T-cell (primary cell): ENCODE measurements at regions of chr7 and their contacts with region 1.

Region 1: DNA sequence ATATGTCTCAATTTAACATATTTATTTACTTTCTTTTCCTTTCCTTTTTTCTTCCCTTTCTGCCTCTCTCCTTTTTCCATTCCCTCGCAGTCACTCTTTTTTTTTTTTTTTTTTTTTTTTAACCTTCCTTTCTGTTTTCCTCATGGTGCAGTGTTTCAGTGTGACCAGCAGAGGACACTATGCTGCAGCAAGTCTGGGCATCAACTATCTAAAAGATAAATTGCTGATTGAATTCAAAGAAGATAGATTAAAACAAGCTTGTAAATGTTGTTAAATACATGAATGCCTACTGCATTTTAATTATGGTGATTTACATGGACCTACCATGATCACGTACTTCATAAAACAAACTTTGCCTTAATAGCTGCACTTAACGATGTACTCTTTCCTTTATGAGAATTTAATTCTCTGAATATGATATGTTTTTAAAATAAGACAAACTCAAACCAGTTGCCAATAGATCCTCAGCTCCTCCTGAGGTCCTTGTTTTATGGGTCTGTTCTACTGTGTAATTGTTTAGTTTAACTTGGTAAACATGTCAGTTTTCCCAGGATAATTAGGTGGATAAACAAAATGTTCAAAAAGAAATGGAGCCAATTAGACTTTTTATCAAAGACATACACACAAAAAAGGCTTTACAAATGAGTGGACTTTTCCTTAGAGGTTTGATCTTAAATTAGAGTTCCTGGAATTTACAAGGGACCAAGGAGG is 101.0 kb upstream of the AGR3 start:
- DNase-seq: peak in 18 of 35 experiments; percentile 1 to 61 (median 4)
- ATAC-seq: peak in 2 of 4 experiments; percentile 49 to 51
- H3K4me3 ChIP-seq: no peak overlapping the region
- H3K4me3 Mint-ChIP-seq: no peak overlapping the region
- H3K27ac ChIP-seq: no peak overlapping the region
- H3K27ac Mint-ChIP-seq: peak overlapping the region in 1 of 2 donors; percentile 65
- H3K4me1 ChIP-seq: no peaks in the 10 kb centered on the region
- H3K4me1 Mint-ChIP-seq: peaks cover 3 to 7% (median 6%) of the 10 kb centered on the region in 3 donors
- H3K27me3 ChIP-seq: peaks cover 0 to 3% of the 10 kb centered on the region in 2 experiments
- H3K27me3 Mint-ChIP-seq: peaks cover 4 to 6% of the 10 kb centered on the region in 2 donors

Region 2: DNA sequence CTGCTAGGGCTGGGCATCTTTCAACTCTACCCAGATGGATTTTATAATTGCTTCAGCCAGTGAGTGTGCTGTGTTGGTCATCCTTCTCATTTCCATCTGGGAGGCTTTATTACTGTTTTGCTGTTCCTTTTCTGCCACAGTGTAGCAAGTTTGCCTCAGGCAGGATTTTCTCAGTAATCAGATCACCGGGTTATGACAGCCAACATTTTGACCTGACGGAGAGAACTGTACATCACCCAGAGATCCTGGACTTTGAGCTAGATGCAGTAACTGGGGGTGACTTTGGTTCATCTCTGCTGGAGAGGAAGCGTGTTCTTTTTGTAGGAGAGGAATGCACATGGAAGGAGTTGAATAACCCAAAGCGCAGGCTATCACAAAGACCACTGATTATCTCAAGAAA is 10.7 kb after region 1 on chr7:
- CTCF ChIA-PET with region 1: interaction called, 10 to 13 read pairs
- POLR2A ChIA-PET with region 1: no interaction called
- DNase-seq: no peak
- ATAC-seq: no peak
- H3K4me3 ChIP-seq: no peak overlapping the region
- H3K4me3 Mint-ChIP-seq: no peak overlapping the region
- H3K27ac ChIP-seq: no peak overlapping the region
- H3K27ac Mint-ChIP-seq: no peak overlapping the region
- H3K4me1 ChIP-seq: no peaks in the 10 kb centered on the region
- H3K4me1 Mint-ChIP-seq: no peaks in the 10 kb centered on the region
- H3K27me3 ChIP-seq: no peaks in the 10 kb centered on the region
- H3K27me3 Mint-ChIP-seq: no peaks in the 10 kb centered on the region

Region 3: GRCh38 chr7:17871815-17872533 is 889.2 kb after region 1 on chr7:
- CTCF ChIA-PET with region 1: interaction called, 5 to 12 read pairs
- POLR2A ChIA-PET with region 1: no interaction called
- DNase-seq: no peak
- ATAC-seq: no peak
- H3K4me3 ChIP-seq: no peak overlapping the region
- H3K4me3 Mint-ChIP-seq: no peak overlapping the region
- H3K27ac ChIP-seq: no peak overlapping the region
- H3K27ac Mint-ChIP-seq: no peak overlapping the region
- H3K4me1 ChIP-seq: no peaks in the 10 kb centered on the region
- H3K4me1 Mint-ChIP-seq: no peaks in the 10 kb centered on the region
- H3K27me3 ChIP-seq: no peaks in the 10 kb centered on the region
- H3K27me3 Mint-ChIP-seq: no peaks in the 10 kb centered on the region

Region 4: DNA sequence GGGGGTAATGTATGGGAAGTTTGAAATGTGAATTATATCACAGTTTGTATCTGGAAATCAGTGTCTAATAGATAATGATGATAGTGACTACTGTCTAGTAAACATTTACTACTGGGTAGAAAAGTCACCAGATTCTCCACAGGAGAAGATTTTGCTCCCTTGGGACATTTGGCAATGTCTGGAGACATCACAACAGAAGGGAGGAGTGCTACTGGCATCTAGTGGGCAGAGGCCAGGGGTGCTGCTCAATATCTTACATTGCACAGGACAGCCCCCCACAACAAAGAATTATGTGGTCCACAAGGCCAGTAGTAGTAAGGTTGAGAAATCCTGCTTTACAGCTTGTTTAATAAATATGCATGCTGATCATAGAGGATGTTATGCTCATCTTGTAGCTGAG is 1137.2 kb after region 1 on chr7:
- CTCF ChIA-PET with region 1: no interaction called
- POLR2A ChIA-PET with region 1: no interaction called
- DNase-seq: no peak
- ATAC-seq: no peak
- H3K4me3 ChIP-seq: no peak overlapping the region
- H3K4me3 Mint-ChIP-seq: no peak overlapping the region
- H3K27ac ChIP-seq: no peak overlapping the region
- H3K27ac Mint-ChIP-seq: no peak overlapping the region
- H3K4me1 ChIP-seq: no peaks in the 10 kb centered on the region
- H3K4me1 Mint-ChIP-seq: no peaks in the 10 kb centered on the region
- H3K27me3 ChIP-seq: no peaks in the 10 kb centered on the region
- H3K27me3 Mint-ChIP-seq: peaks cover 0 to 3% of the 10 kb centered on the region in 2 donors